Natural killer cell (primary cell): ENCODE measurements at regions of chr5 and their contacts with region 1.

Region 1: DNA sequence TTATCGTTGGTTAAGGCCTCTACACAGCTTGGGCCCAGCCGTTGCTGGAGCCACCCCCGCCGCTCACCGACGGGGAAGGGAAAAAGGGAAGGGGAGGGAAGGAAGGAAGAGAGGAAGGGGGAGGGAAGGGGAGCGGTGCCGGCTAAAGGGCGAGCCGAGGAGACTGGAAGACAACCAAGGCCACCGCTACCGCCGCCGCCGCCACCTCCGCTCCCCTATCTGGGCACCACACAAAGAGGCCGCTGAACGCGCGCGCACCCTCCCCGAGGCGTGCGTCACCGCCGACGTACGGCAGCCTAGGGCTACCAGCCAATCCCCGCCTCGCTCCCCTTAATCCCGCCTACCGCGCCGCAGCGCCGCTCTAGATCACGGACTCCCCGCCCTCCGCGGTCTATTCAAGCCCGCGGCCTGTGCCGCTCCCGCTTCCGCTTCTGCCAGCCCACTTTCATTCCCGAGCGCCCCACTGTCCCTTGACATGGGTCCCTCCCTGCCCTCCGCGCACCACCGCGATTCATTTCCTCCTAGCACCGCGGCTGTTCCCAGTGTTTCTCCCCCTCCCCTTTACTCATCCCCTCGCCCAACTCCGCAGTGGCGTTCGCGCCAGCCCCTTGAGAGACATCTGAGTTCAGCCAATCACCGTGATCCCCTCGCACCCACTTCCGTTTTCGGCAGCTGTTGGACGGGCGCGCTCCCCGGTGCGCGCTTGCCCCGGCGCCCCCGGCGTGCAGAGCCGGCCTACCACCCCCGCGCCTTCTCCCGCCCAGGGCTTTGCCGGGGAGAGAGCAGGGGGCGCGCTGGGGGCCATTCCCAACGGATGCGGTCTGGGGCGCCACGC is at the start of gene HNRNPA0:
- DNase-seq: peak; percentile 96 to 99
- ATAC-seq: peak; percentile 81 to 94 (median 85)
- H3K4me3 ChIP-seq: peak within 1 kb of the TSS; percentile 77
- H3K4me3 Mint-ChIP-seq: peak within 1 kb of the TSS; percentile 97
- H3K27ac ChIP-seq: peak within 1 kb of the TSS; percentile 99
- H3K27ac Mint-ChIP-seq: peak within 1 kb of the TSS; percentile 100
- H3K4me1 ChIP-seq: peaks cover 14% of the 10 kb centered on the region
- H3K4me1 Mint-ChIP-seq: peaks cover 30 to 42% of the 10 kb centered on the region in 2 donors
- H3K27me3 ChIP-seq: no peaks in the 10 kb centered on the region
- H3K27me3 Mint-ChIP-seq: peaks cover 0 to 3% of the 10 kb centered on the region in 2 donors
- CTCF ChIP-seq: no peak
- total RNA-seq, gene HNRNPA0: 31.5 to 35.9 (median 33.5) TPM

Region 2: DNA sequence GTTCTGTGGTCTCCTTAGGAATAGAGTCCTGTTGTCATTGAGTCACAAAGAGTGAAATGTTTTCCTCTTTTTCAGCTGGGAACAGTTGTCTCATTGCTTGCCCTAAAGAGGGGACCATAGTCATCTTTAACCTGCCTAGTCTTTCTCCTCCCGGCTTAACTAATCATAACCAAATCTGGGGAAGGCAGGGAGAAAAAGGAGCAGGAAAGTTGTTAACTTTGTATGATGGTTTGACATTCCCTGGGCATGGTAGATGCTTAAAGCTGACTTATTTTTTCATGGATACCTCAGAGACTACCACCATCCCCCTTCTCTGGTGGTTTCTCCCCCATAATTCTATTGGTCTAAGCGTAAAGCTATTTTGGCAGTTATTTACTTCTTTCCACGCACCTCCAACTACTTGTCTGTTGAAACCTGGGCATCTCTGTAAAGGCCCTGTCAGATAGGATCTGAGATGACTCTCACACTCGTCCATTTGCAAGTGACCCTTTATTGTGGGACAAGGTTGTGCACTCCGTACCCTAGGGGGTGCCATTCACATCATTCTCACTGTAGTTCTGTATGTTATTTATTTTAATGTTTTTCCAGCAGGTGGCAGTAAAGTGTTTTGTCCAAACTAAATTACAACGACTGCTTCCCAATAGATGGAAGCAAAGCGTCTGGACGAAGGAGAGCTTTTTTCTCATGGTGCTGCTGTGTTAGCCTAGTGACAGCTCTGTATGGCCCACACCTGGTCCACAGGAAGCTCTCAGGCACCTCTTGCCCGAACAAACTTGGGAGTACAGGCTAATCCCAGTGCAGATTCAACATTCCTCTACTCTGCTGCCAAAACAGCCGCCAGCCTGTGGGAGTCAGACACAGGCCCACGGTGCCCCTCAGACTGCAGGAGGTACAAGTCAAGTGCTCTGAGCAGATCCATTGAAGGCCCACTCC is 281.5 kb after region 1 on chr5:
- intact Hi-C with region 1: loop called (anchors 2 kb)
- DNase-seq: peak; percentile 33 to 89
- ATAC-seq: peak; percentile 60 to 77 (median 62)
- H3K4me3 ChIP-seq: no peak overlapping the region
- H3K4me3 Mint-ChIP-seq: peak overlapping the region; percentile 74
- H3K27ac ChIP-seq: no peak overlapping the region
- H3K27ac Mint-ChIP-seq: peak overlapping the region; percentile 50 to 58
- H3K4me1 ChIP-seq: peaks cover 18% of the 10 kb centered on the region
- H3K4me1 Mint-ChIP-seq: peaks cover 31 to 32% of the 10 kb centered on the region in 2 donors
- H3K27me3 ChIP-seq: no peaks in the 10 kb centered on the region
- H3K27me3 Mint-ChIP-seq: no peaks in the 10 kb centered on the region
- CTCF ChIP-seq: peak; percentile 92